K562 (cell line): ENCODE measurements at regions of chrX and their contacts with region 1.

Region 1: GRCh38 chrX:49291615-49292337 is 11.7 kb upstream of the GAGE10 start:
- DNase-seq: peak; percentile 58 to 86 (median 64)
- ATAC-seq: peak; percentile 98
- H3K4me3 ChIP-seq: no peak overlapping the region
- H3K27ac ChIP-seq: no peak overlapping the region
- H3K4me1 ChIP-seq: peaks cover 4 to 13% of the 10 kb centered on the region in 2 experiments; a peak in 4 of 5 replicates
- H3K27me3 ChIP-seq: no peaks in the 10 kb centered on the region
- CTCF ChIP-seq: peak; percentile 73 to 90 (median 76)
- EP300 ChIP-seq: no peak
- POLR2A ChIP-seq: no peak
- RAD21 ChIP-seq: peak; percentile 58 to 85

Region 2: DNA sequence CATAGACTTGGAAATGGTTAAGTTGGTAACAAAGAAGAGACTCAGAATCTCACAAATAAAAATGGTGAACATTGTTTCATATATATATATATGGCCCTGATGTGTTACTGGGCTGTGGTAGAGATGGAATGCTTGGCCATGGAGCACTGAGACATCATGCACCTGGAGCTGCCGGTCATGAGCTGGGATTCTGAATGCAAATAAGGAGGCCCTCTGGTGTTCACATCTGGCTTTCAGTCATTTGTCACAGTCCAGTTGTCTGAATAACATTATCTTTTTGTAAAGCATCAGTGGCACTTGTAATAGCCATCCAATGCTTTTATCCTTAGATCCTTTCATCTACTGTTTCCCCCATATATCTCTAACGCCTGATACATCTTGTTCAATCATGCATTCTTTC is 345.9 kb after region 1 on chrX:
- CTCF ChIA-PET with region 1: no interaction called
- POLR2A ChIA-PET with region 1: no interaction called
- in situ Hi-C with region 1: no loop called
- intact Hi-C with region 1: loop called (anchors 2 kb)
- DNase-seq: peak in 3 of 4 experiments; percentile 14 to 21 (median 18)
- ATAC-seq: 0 out of 3 replicates have a peak, but pooled peaks have one; percentile 31
- H3K4me3 ChIP-seq: no peak overlapping the region
- H3K27ac ChIP-seq: no peak overlapping the region
- H3K4me1 ChIP-seq: no peaks in the 10 kb centered on the region
- H3K27me3 ChIP-seq: no peaks in the 10 kb centered on the region; a peak in 1 of 5 replicates
- CTCF ChIP-seq: peak; percentile 8 to 26 (median 18); a peak in 1 of 6 replicates
- EP300 ChIP-seq: no peak
- POLR2A ChIP-seq: no peak
- RAD21 ChIP-seq: 0 out of 4 replicates have a peak, but pooled peaks of 1 of the 2 experiments have one; percentile 20

Region 3: GRCh38 chrX:49754233-49754857 is 462.6 kb after region 1 on chrX:
- CTCF ChIA-PET with region 1: interaction called, 3 read pairs
- POLR2A ChIA-PET with region 1: no interaction called
- in situ Hi-C with region 1: no loop called
- intact Hi-C with region 1: loop called (anchors 2 kb)
- DNase-seq: peak; percentile 39 to 59 (median 52)
- ATAC-seq: peak; percentile 93
- H3K4me3 ChIP-seq: no peak overlapping the region
- H3K27ac ChIP-seq: no peak overlapping the region
- H3K4me1 ChIP-seq: no peaks in the 10 kb centered on the region
- H3K27me3 ChIP-seq: peaks cover 0 to 8% of the 10 kb centered on the region in 2 experiments; a peak in 1 of 5 replicates
- CTCF ChIP-seq: peak; percentile 75 to 94 (median 84)
- EP300 ChIP-seq: no peak
- POLR2A ChIP-seq: no peak
- RAD21 ChIP-seq: peak; percentile 61 to 79; a peak in 3 of 4 replicates

Region 4: DNA sequence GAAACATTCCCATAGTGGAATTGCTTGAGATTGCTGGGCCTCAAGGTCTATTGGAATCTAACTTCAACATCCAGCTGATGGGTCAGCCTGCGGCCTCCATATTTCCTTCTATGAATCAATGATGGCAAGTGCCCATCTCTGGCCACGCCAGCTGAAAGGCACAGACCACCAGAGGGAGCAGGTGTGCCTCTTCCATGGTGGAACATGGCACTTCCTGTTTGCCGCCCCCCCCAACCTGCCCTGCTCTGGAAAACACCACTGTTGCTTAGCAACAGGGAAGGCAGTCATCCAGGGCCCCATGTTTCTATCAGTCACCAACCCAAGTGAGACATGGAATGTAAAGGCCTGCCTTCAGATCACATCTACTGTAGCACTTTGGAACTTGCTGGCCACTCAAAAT is 548.9 kb after region 1 on chrX:
- CTCF ChIA-PET with region 1: no interaction called
- POLR2A ChIA-PET with region 1: no interaction called
- in situ Hi-C with region 1: no loop called
- intact Hi-C with region 1: loop called (anchors 5 kb)
- DNase-seq: peak; percentile 68 to 81 (median 71)
- ATAC-seq: peak; percentile 91
- H3K4me3 ChIP-seq: no peak overlapping the region
- H3K27ac ChIP-seq: no peak overlapping the region
- H3K4me1 ChIP-seq: peaks cover 0 to 10% of the 10 kb centered on the region in 2 experiments; a peak in 2 of 5 replicates
- H3K27me3 ChIP-seq: no peaks in the 10 kb centered on the region
- CTCF ChIP-seq: peak; percentile 80 to 82 (median 82)
- EP300 ChIP-seq: no peak
- POLR2A ChIP-seq: no peak
- RAD21 ChIP-seq: peak; percentile 74 to 80